CD4-positive, alpha-beta memory T cell (primary cell): ENCODE measurements at regions of chr18 and their contacts with region 1.

Region 1: DNA sequence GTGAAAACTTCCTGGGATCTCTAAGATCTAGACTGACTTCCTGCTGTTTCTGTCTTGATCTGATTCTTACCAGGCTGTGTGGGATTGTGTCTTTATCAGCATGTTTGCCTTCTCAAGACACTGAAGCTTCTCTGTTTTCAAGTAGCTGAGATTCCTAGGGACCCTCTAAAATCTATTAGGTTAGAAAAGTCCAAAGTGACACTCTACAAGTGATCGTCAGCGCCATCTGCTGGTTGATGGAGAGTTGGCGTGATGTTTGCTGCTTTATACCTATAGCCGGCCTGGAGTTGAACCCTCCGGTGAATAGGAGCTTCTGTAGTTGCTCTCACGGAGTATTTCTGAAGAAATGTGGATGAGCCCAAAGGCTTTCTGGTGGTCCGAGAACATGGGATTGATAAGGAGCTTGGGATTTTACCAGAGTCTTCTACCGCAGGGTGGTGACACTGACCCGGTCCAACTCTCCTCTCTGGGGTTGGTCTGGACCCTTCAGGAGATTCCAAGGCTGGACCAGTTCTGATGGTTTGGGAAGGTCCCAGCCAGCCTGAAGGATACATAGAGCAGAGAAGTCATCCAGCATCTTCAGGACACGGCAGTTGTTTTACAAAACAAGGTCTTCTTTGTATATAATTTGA is 96.0 kb upstream of the TTC39C start:
- DNase-seq: peak; percentile 60 to 76 (median 68)
- H3K4me3 ChIP-seq: no peak overlapping the region
- H3K4me3 Mint-ChIP-seq: peak overlapping the region in 3 of 8 donors; percentile 21 to 41 (median 37)
- H3K27ac ChIP-seq: no peak overlapping the region
- H3K27ac Mint-ChIP-seq: peak overlapping the region in 5 of 7 donors; percentile 19 to 69 (median 26)
- H3K4me1 ChIP-seq: peaks cover 21% of the 10 kb centered on the region
- H3K4me1 Mint-ChIP-seq: peaks cover 23 to 29% (median 24%) of the 10 kb centered on the region in 4 donors
- H3K27me3 ChIP-seq: no peaks in the 10 kb centered on the region
- H3K27me3 Mint-ChIP-seq: no peaks in the 10 kb centered on the region

Region 2: GRCh38 chr18:23503038-23503962 is 415.2 kb before region 1 on chr18 and contains the start of gene RMC1:
- CTCF ChIA-PET with region 1: interaction called, 6 read pairs
- POLR2A ChIA-PET with region 1: no interaction called
- intact Hi-C with region 1: loop called (anchors 2 kb)
- DNase-seq: peak; percentile 94 to 96 (median 95)
- H3K4me3 ChIP-seq: peak within 1 kb of the TSS; percentile 84 to 85
- H3K4me3 Mint-ChIP-seq: peak within 1 kb of the TSS; percentile 89 to 97 (median 94)
- H3K27ac ChIP-seq: peak within 1 kb of the TSS; percentile 82
- H3K27ac Mint-ChIP-seq: peak within 1 kb of the TSS; percentile 91 to 98 (median 96)
- H3K4me1 ChIP-seq: peaks cover 48% of the 10 kb centered on the region
- H3K4me1 Mint-ChIP-seq: peaks cover 32 to 71% (median 50%) of the 10 kb centered on the region in 4 donors
- H3K27me3 ChIP-seq: no peaks in the 10 kb centered on the region
- H3K27me3 Mint-ChIP-seq: no peaks in the 10 kb centered on the region
- total RNA-seq, gene RMC1: 56.6 TPM

Region 3: GRCh38 chr18:23812546-23813440 is 105.7 kb before region 1 on chr18:
- CTCF ChIA-PET with region 1: interaction called, 20 read pairs
- POLR2A ChIA-PET with region 1: no interaction called
- intact Hi-C with region 1: loop called (anchors 1 kb)
- DNase-seq: peak in 4 of 5 donors; percentile 28 to 39 (median 32)
- H3K4me3 ChIP-seq: no peak overlapping the region
- H3K4me3 Mint-ChIP-seq: no peak overlapping the region
- H3K27ac ChIP-seq: no peak overlapping the region
- H3K27ac Mint-ChIP-seq: no peak overlapping the region
- H3K4me1 ChIP-seq: peaks cover 13% of the 10 kb centered on the region
- H3K4me1 Mint-ChIP-seq: peaks cover 2 to 16% (median 12%) of the 10 kb centered on the region in 4 donors
- H3K27me3 ChIP-seq: no peaks in the 10 kb centered on the region
- H3K27me3 Mint-ChIP-seq: no peaks in the 10 kb centered on the region

Region 4: DNA sequence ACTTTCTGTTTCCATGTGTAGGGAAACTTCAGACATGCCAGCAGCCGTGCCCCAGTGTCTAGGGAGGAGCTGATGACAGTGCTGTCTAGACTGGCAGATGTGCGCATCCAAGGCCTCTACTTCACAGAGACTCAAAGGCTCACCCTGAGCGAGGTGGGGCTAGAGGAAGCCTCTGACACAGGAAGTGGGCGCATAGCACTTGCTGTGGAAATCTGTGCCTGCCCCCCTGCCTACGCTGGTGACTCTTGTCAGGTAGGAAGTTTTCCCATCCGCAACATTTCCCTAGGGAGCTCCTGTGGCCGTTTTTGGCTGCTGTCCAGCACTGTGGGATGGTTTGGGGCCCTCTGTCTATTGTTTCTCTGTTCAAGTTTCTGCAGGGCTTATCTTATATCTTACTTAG is 47.1 kb before region 1 on chr18:
- CTCF ChIA-PET with region 1: interaction called, 14 read pairs
- POLR2A ChIA-PET with region 1: no interaction called
- intact Hi-C with region 1: loop called (anchors 1 kb)
- DNase-seq: peak; percentile 68 to 94 (median 76)
- H3K4me3 ChIP-seq: no peak overlapping the region
- H3K4me3 Mint-ChIP-seq: peak overlapping the region in 7 of 8 donors; percentile 68 to 81 (median 72)
- H3K27ac ChIP-seq: peak overlapping the region; percentile 7
- H3K27ac Mint-ChIP-seq: peak overlapping the region; percentile 93 to 98 (median 97)
- H3K4me1 ChIP-seq: peaks cover 44% of the 10 kb centered on the region
- H3K4me1 Mint-ChIP-seq: peaks cover 23 to 51% (median 39%) of the 10 kb centered on the region in 4 donors
- H3K27me3 ChIP-seq: no peaks in the 10 kb centered on the region
- H3K27me3 Mint-ChIP-seq: no peaks in the 10 kb centered on the region

Region 5: GRCh38 chr18:23943104-23943503 is 24.6 kb after region 1 on chr18:
- CTCF ChIA-PET with region 1: interaction called, 30 read pairs
- POLR2A ChIA-PET with region 1: no interaction called
- intact Hi-C with region 1: no loop called
- DNase-seq: peak in 3 of 5 donors; percentile 26 to 40 (median 35)
- H3K4me3 ChIP-seq: peak overlapping the region in 1 of 2 donors; percentile 22
- H3K4me3 Mint-ChIP-seq: peak overlapping the region; percentile 55 to 90 (median 80)
- H3K27ac ChIP-seq: no peak overlapping the region
- H3K27ac Mint-ChIP-seq: peak overlapping the region; percentile 17 to 94 (median 84)
- H3K4me1 ChIP-seq: peaks cover 36% of the 10 kb centered on the region
- H3K4me1 Mint-ChIP-seq: peaks cover 21 to 49% (median 32%) of the 10 kb centered on the region in 4 donors
- H3K27me3 ChIP-seq: no peaks in the 10 kb centered on the region
- H3K27me3 Mint-ChIP-seq: no peaks in the 10 kb centered on the region

Region 6: GRCh38 chr18:23994361-23994902 is 75.9 kb after region 1 on chr18:
- CTCF ChIA-PET with region 1: interaction called, 12 read pairs
- POLR2A ChIA-PET with region 1: interaction called, 5 read pairs
- intact Hi-C with region 1: no loop called
- DNase-seq: peak; percentile 61 to 81 (median 66)
- H3K4me3 ChIP-seq: peak overlapping the region; percentile 49 to 70
- H3K4me3 Mint-ChIP-seq: peak overlapping the region; percentile 82 to 96 (median 91)
- H3K27ac ChIP-seq: peak overlapping the region; percentile 78
- H3K27ac Mint-ChIP-seq: peak overlapping the region; percentile 86 to 98 (median 96)
- H3K4me1 ChIP-seq: peaks cover 94% of the 10 kb centered on the region
- H3K4me1 Mint-ChIP-seq: peaks cover 49 to 91% (median 63%) of the 10 kb centered on the region in 4 donors
- H3K27me3 ChIP-seq: no peaks in the 10 kb centered on the region
- H3K27me3 Mint-ChIP-seq: no peaks in the 10 kb centered on the region

Region 7: DNA sequence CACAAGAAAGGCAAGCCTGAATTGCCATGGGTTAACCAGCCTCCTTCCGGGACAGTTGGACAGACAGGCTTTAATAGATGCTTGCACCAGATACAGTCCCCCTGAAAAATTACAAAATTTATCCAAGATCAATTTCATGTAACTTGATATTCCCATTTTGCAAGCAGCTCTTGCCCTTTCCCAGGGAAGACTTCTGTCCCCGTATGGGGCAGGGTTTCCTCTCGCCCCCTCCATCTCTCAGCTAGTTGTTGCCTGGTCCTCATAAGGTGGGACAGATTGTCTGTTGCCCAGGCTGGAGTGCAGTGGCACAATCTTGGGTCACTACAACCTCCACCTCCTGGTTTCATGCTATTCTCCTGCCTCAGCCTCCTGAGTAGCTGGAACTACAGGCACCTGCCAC is 157.2 kb after region 1 on chr18:
- CTCF ChIA-PET with region 1: interaction called, 11 read pairs
- POLR2A ChIA-PET with region 1: no interaction called
- intact Hi-C with region 1: no loop called
- DNase-seq: no peak
- H3K4me3 ChIP-seq: no peak overlapping the region
- H3K4me3 Mint-ChIP-seq: peak overlapping the region in 5 of 8 donors; percentile 48 to 70 (median 64)
- H3K27ac ChIP-seq: no peak overlapping the region
- H3K27ac Mint-ChIP-seq: peak overlapping the region; percentile 79 to 97 (median 87)
- H3K4me1 ChIP-seq: peaks cover 22% of the 10 kb centered on the region
- H3K4me1 Mint-ChIP-seq: peaks cover 38 to 78% (median 57%) of the 10 kb centered on the region in 4 donors
- H3K27me3 ChIP-seq: no peaks in the 10 kb centered on the region
- H3K27me3 Mint-ChIP-seq: no peaks in the 10 kb centered on the region

Region 8: GRCh38 chr18:24695168-24695567 is 776.7 kb after region 1 on chr18:
- CTCF ChIA-PET with region 1: no interaction called
- POLR2A ChIA-PET with region 1: no interaction called
- intact Hi-C with region 1: no loop called
- DNase-seq: no peak
- H3K4me3 ChIP-seq: no peak overlapping the region
- H3K4me3 Mint-ChIP-seq: no peak overlapping the region
- H3K27ac ChIP-seq: no peak overlapping the region
- H3K27ac Mint-ChIP-seq: no peak overlapping the region
- H3K4me1 ChIP-seq: no peaks in the 10 kb centered on the region
- H3K4me1 Mint-ChIP-seq: no peaks in the 10 kb centered on the region
- H3K27me3 ChIP-seq: no peaks in the 10 kb centered on the region
- H3K27me3 Mint-ChIP-seq: peaks cover 2 to 8% of the 10 kb centered on the region in 2 donors